AG04450 (cell line): ENCODE measurements at regions of chr1 and their contacts with region 1.

Region 1: GRCh38 chr1:113255720-113256347 is 134.5 kb upstream of the MAGI3 start:
- DNase-seq: no peak
- H3K4me3 ChIP-seq: no peak overlapping the region
- H3K27ac ChIP-seq: no peak overlapping the region
- H3K27me3 ChIP-seq: peaks cover 17% of the 10 kb centered on the region
- CTCF ChIP-seq: no peak

Region 2: DNA sequence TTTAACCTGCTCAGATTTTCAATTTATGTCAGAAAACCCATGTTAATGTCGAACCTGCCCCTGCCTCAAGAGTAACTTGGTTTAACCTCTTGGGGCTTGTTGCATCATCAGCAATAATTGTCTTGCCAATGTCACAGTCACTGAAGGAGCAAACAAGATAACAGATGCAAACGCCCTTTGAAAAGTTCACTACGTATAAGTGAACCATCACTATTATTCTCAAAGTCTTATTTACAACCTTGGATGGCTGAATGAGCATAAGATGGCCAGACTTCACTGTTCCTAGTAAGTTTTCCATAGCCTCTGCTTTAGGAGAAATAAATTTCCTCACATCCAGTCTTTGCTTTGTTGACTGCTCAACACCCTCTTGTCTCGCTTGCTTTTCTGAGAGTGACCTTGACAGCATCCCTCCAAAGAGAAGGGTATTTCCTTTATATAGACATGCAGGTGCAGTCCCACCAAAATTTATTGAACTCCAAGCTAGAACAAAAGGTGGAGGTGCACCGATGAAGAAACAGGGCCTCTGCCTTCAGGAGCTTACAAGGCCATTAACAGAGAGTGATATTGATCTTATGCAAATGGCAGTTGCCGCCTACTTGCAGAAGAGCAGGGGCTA is 183.6 kb before region 1 on chr1:
- CTCF ChIA-PET with region 1: no interaction called
- POLR2A ChIA-PET with region 1: no interaction called
- DNase-seq: no peak
- H3K4me3 ChIP-seq: peak overlapping the region; percentile 99
- H3K27ac ChIP-seq: no peak overlapping the region
- H3K27me3 ChIP-seq: no peaks in the 10 kb centered on the region
- CTCF ChIP-seq: no peak

Region 3: DNA sequence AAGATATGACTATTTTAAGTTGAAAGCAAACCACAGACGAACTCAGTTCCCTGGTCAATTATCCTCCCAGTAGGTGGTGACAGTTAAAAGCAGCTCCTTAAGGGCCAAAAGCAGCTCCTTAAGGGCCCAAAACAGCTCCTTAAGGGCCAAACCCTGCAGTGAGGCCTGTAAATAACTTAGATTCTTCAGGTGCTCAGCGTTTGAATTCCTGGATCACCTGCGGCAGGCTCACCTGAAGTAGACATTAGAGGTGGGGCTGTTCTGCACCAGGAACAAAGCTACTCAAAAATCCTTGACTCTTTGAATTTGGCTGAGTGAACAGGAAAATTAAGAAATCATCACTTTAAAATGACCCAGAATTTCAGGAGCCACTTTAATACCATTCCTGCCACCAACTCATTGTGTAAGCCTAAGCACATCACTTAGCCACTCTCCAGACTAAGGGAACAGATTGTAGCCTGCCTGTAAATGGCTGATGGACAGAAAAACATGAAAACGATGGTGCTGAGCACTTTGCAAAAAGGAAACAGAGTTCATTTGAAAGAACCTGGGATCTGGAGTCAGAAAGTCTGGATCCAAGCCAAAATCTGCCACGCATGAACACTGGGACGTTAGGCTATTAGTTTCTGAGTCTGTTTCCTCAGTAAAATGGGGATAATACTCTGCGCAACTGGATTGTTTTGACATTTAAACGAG is 55.9 kb before region 1 on chr1:
- CTCF ChIA-PET with region 1: no interaction called
- POLR2A ChIA-PET with region 1: interaction called, 12 read pairs
- DNase-seq: no peak
- H3K4me3 ChIP-seq: no peak overlapping the region
- H3K27ac ChIP-seq: no peak overlapping the region
- H3K27me3 ChIP-seq: peaks cover 3% of the 10 kb centered on the region
- CTCF ChIP-seq: no peak

Region 4: GRCh38 chr1:113269168-113269963 is 13.5 kb after region 1 on chr1:
- CTCF ChIA-PET with region 1: no interaction called
- POLR2A ChIA-PET with region 1: no interaction called
- DNase-seq: no peak
- H3K4me3 ChIP-seq: no peak overlapping the region
- H3K27ac ChIP-seq: no peak overlapping the region
- H3K27me3 ChIP-seq: no peaks in the 10 kb centered on the region
- CTCF ChIP-seq: no peak

Region 5: GRCh38 chr1:113325039-113325438 is 69.2 kb after region 1 on chr1:
- CTCF ChIA-PET with region 1: no interaction called
- POLR2A ChIA-PET with region 1: no interaction called
- DNase-seq: no peak
- H3K4me3 ChIP-seq: no peak overlapping the region
- H3K27ac ChIP-seq: no peak overlapping the region
- H3K27me3 ChIP-seq: no peaks in the 10 kb centered on the region
- CTCF ChIP-seq: no peak